HCT116 (cell line): ENCODE measurements at regions of chr5 and their contacts with region 1.

Region 1: GRCh38 chr5:105684799-105685198 is 1985.9 kb downstream of the EFNA5 start:
- DNase-seq: no peak
- ATAC-seq: no peak
- H3K4me3 ChIP-seq: no peak overlapping the region
- H3K27ac ChIP-seq: no peak overlapping the region
- H3K4me1 ChIP-seq: no peaks in the 10 kb centered on the region
- H3K27me3 ChIP-seq: no peaks in the 10 kb centered on the region
- CTCF ChIP-seq: no peak
- POLR2A ChIP-seq: no peak
- RAD21 ChIP-seq: no peak

Region 2: GRCh38 chr5:105702323-105702722 is 17.5 kb after region 1 on chr5:
- CTCF ChIA-PET with region 1: no interaction called
- POLR2A ChIA-PET with region 1: no interaction called
- RAD21 ChIA-PET with region 1: no interaction called
- intact Hi-C with region 1: loop called (anchors 2 kb)
- DNase-seq: no peak
- ATAC-seq: no peak
- H3K4me3 ChIP-seq: no peak overlapping the region
- H3K27ac ChIP-seq: no peak overlapping the region
- H3K4me1 ChIP-seq: no peaks in the 10 kb centered on the region
- H3K27me3 ChIP-seq: no peaks in the 10 kb centered on the region
- CTCF ChIP-seq: no peak
- POLR2A ChIP-seq: no peak
- RAD21 ChIP-seq: no peak